Naive thymus-derived CD4-positive, alpha-beta T cell (primary cell): ENCODE measurements at regions of chr3 and their contacts with region 1.

Region 1: DNA sequence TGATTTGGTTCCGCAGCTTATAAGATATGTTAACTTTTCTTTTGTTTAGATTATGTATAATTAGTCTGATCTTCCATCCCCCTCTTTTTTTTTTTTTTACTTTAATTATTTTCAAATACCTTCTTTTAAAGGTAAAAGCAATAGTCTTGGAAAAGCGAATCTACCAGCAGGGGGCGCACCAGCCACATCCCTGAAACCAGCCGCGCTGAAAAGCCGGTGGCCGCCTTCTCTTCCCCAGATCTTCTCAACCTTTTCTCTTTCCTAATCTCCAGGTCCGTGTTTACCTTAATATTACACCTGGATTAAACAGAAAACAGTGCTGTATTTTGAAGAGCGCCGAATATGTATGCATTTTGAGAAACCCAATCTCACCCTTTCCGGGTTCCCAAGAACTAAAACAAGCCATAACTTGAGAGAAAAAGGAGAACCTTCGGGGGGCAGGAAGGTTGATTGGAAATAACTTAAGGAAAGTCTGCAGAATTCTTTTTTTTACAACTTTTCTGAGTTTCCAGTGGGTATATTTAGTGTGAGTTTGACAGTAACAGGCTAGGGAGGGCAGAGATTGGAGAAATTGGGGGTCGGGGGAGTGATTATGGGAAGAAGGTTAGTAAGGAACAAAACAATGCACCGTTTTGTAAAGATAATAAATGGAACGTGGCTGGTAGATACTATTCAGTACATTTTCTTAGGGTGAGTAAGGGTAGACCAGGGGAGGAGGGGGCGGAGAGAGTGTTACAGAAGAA is 2.0 kb upstream of the SOX2 start:
- DNase-seq: peak in 3 of 9 donors; percentile 26 to 67 (median 35)
- ATAC-seq: no peak
- H3K4me3 ChIP-seq: no peak overlapping the region
- H3K4me3 Mint-ChIP-seq: peak overlapping the region in 8 of 10 donors; percentile 18 to 72 (median 48)
- H3K27ac ChIP-seq: no peak overlapping the region
- H3K27ac Mint-ChIP-seq: peak overlapping the region in 1 of 9 donors; percentile 86
- H3K4me1 ChIP-seq: peaks cover 0 to 6% of the 10 kb centered on the region in 2 donors
- H3K4me1 Mint-ChIP-seq: peaks cover 5 to 12% (median 8%) of the 10 kb centered on the region in 7 donors
- H3K27me3 ChIP-seq: peaks cover 12 to 46% of the 10 kb centered on the region in 2 donors
- H3K27me3 Mint-ChIP-seq: peaks cover 56 to 70% (median 66%) of the 10 kb centered on the region in 5 donors

Region 2: DNA sequence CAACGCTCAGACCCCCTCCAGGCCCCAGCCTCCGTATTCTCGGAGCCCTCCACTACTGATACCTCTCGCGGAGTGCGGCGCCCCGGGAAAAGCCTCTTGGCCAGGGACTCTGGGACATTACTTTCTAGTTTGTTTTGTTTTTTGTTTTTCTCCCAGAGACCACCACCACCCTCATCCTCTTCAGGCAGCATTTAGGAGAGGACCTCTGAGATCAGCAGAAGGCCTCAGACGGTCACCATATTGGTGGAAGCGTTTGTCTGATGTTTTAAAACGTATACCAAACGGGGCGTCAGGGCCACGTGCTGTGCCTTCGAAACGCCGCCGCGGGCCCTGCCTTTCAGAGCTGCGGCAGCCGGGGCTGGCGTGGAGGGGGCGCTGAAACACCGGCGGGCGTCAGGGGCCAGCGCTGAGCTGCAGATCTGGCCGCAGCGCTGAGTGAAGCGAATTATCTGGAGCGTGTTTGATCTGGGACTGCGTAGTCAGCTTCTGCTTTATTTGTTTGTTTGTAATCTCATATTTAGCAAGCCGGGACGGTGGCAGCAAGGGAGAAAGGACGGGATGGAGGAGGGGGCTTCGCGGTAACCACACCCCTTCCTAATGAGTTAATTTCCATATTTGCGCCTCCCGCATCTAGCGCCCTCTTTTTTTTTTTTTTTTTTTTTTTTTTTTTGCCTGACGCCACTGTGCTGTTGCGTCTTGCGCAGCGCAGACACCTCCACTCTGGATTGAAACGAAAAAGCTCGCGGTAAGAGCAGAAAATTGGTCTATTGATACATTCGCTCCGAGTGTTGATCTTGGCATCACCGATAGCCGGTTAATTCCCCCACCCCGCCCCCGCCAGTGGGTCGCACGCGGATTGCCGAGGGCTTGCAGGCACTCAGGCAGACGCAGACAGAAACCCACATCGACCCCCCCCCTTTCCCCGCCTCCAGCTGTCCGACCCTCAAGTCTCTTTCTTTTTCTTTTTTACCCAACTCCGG is 16.9 kb after region 1 on chr3:
- CTCF ChIA-PET with region 1: interaction called, 3 read pairs
- POLR2A ChIA-PET with region 1: no interaction called
- intact Hi-C with region 1: loop called in 1 of 2 experiments (anchors 1 kb)
- DNase-seq: no peak
- ATAC-seq: no peak
- H3K4me3 ChIP-seq: peak overlapping the region; percentile 45
- H3K4me3 Mint-ChIP-seq: peak overlapping the region; percentile 62 to 84 (median 80)
- H3K27ac ChIP-seq: no peak overlapping the region
- H3K27ac Mint-ChIP-seq: peak overlapping the region in 4 of 9 donors; percentile 20 to 73 (median 60)
- H3K4me1 ChIP-seq: peaks cover 0 to 3% of the 10 kb centered on the region in 2 donors
- H3K4me1 Mint-ChIP-seq: peaks cover 0 to 21% (median 17%) of the 10 kb centered on the region in 7 donors
- H3K27me3 ChIP-seq: peaks cover 16 to 38% of the 10 kb centered on the region in 2 donors
- H3K27me3 Mint-ChIP-seq: peaks cover 90 to 98% (median 94%) of the 10 kb centered on the region in 5 donors

Region 3: DNA sequence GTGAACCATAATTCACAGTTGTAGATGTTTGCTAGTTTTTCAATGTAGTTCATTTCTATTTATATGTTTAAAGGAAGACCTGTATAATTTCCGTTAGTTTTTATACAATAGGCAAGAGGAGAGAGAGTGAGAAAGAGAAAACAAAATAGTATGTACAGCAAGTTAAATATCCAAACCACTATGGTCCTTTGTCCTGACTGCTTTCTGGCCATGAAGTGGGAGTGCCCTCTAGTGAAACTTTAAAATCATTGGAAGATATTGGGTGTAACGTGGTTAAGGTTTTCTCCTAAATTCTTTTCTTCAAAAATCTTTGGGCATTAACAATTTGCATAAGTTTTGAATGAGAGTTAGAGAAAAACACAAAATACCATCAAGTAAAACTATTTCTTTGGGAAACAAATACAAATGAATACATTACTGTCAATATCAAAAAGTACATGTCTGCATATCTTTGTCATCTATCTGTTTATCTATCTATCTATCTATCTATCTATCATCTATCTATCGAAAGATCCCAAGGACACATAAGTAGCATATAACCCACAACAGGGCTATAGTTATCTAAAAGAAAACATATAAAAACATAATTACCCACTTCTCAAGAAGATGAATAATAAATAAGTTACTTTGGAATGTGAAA is 549.0 kb after region 1 on chr3:
- CTCF ChIA-PET with region 1: no interaction called
- POLR2A ChIA-PET with region 1: no interaction called
- intact Hi-C with region 1: loop called in 1 of 2 experiments (anchors 2 kb)
- DNase-seq: no peak
- ATAC-seq: no peak
- H3K4me3 ChIP-seq: no peak overlapping the region
- H3K4me3 Mint-ChIP-seq: no peak overlapping the region
- H3K27ac ChIP-seq: no peak overlapping the region
- H3K27ac Mint-ChIP-seq: no peak overlapping the region
- H3K4me1 ChIP-seq: no peaks in the 10 kb centered on the region
- H3K4me1 Mint-ChIP-seq: peaks cover 0 to 1% (median 0%) of the 10 kb centered on the region in 7 donors
- H3K27me3 ChIP-seq: no peaks in the 10 kb centered on the region
- H3K27me3 Mint-ChIP-seq: peaks cover 5 to 24% (median 14%) of the 10 kb centered on the region in 5 donors

Region 4: DNA sequence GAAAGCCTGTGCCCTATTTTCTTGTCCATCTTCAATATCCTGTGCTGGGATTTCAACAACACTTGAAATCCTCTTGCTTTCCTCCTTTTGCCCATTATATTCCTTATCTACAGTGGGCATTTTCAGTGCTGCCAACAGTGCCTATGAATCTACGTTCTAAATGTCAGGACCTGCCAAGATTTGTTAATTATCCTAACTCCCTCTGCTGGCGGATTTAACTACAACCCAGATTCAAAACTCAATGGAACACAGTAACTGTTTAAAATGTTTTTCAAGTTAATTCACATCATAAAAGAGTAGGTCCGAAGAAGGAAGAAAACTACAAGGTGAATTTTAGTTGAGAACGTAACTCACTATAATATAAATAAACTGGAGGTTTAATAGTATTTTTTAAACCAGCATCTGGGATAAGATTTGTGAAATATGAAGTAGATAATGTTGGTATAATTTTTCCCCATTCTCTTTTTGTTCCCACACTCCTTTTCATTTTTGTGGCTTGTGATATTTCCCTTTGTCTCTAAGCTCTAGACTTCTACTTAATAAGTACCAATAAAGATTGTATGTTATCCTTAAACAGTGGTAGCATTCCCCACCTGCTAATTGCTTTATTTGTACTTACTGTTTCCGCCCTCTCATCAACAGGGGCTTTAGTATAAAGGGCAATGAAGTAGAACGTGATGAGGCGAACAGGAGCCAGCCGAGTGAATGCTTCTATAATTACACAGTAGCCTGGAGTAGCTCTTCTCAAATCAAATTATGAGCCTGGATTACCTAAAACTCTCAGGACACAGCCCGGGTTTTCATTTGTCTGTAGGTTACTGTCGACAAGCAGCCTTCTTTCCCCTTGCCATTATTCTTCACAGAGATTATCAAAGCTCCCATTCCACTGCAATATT is 781.1 kb after region 1 on chr3:
- CTCF ChIA-PET with region 1: no interaction called
- POLR2A ChIA-PET with region 1: no interaction called
- intact Hi-C with region 1: loop called in 1 of 2 experiments (anchors 2 kb)
- DNase-seq: no peak
- ATAC-seq: no peak
- H3K4me3 ChIP-seq: no peak overlapping the region
- H3K4me3 Mint-ChIP-seq: no peak overlapping the region
- H3K27ac ChIP-seq: no peak overlapping the region
- H3K27ac Mint-ChIP-seq: no peak overlapping the region
- H3K4me1 ChIP-seq: no peaks in the 10 kb centered on the region
- H3K4me1 Mint-ChIP-seq: no peaks in the 10 kb centered on the region
- H3K27me3 ChIP-seq: no peaks in the 10 kb centered on the region
- H3K27me3 Mint-ChIP-seq: peaks cover 0 to 5% (median 0%) of the 10 kb centered on the region in 5 donors